ENCODE measurements at regions of chr17 and their contacts with region 1.

Region 1: DNA sequence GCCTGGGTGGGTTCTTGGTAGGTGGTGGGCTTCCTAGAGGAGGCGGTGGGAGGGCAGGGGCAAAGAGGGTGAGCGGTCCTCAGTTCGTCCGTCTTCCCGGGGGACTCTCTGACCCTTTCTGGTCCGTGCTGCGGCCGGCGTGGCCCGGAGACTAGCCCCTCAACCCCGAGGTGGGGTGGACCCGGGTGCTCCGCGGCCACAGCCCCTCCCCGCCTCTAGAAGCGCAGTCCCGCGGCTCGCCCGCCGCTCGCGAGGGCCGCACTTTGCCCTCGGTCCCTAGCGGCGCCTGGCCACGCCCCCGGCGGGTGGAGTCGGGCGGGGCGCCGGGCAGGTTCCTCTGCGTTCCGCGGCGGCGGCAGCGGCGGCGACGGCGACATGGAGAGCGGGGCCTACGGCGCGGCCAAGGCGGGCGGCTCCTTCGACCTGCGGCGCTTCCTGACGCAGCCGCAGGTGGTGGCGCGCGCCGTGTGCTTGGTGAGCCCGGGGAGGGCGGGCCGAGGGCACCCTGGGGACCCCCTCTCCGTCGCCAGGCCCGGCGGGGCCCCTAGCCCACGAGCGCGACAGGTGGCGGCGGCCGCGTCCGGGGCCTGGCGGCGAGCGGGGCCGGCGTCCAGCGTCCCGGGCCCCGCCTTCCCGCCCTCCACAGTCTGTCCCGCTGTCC is at the start of gene SYNGR2:
- DNase-seq: no peak
- ATAC-seq: peak; percentile 70
- H3K4me3 ChIP-seq: peak within 1 kb of the TSS; percentile 70
- H3K27ac ChIP-seq: peak within 1 kb of the TSS; percentile 94
- H3K4me1 ChIP-seq: peaks cover 30% of the 10 kb centered on the region
- H3K27me3 ChIP-seq: no peaks in the 10 kb centered on the region
- CTCF ChIP-seq: no peak
- EP300 ChIP-seq: no peak
- POLR2A ChIP-seq: peak; percentile 80
- RAD21 ChIP-seq: no peak
- polyA plus RNA-seq, gene SYNGR2: 4.4 to 28.8 TPM

Region 2: GRCh38 chr17:78040440-78041385 is 127.7 kb before region 1 on chr17:
- CTCF ChIA-PET with region 1: no interaction called
- POLR2A ChIA-PET with region 1: interaction called, 13 read pairs
- RAD21 ChIA-PET with region 1: no interaction called
- SMC1A ChIA-PET with region 1: no interaction called
- in situ Hi-C with region 1: no loop called
- intact Hi-C with region 1: no loop called
- DNase-seq: peak; percentile 21
- ATAC-seq: peak; percentile 99
- H3K4me3 ChIP-seq: peak overlapping the region; percentile 57; the same call in 1 of the 2 replicates
- H3K27ac ChIP-seq: peak overlapping the region; percentile 34; the same call in 1 of the 2 replicates
- H3K4me1 ChIP-seq: no peaks in the 10 kb centered on the region
- H3K27me3 ChIP-seq: no peaks in the 10 kb centered on the region
- CTCF ChIP-seq: peak in 1 of 3 experiments; percentile 25; a peak in 2 of 6 replicates
- EP300 ChIP-seq: no peak
- POLR2A ChIP-seq: no peak
- RAD21 ChIP-seq: no peak

Region 3: DNA sequence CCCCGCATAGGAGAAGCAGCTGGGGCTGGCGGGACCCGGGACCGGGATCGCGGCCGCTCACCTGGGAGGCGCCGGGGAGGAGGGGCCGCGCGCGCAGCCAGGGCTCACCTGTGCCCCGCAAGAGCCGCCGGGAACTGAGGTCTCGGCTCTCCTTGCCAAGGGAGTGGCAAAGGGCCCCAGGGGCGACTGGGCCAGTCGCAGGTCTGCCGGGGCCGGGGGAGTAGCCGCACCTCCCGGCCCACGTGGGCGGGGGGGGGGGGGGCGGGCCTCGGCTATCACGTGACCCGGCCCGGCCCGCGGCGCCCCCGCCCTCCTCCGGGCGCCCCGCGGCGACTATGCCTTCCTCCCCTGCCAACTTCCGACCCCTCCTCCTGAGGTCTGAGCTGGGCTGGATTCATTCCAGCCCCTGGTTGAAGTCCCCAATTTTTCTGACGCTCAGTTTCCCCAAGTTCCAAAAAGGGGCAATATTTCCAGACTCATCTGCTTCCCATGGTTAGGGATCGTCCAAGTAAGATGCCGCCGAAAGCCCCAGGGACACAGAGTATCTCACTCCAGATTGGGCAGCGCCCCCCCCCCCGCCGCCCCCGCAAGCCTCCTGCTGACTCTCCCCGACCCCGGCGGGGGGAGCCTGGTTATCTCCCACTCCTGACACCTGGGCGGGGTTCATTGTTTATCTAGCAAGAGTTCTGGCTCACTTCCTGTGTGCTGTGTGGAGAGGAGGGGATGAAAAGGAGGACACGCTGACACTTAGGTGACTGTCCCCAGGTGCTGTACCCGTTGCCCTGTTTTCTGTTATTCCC is 39.6 kb before region 1 on chr17 and contains the start of gene TMC6:
- CTCF ChIA-PET with region 1: interaction called, 132 read pairs
- POLR2A ChIA-PET with region 1: interaction called, 85 read pairs
- RAD21 ChIA-PET with region 1: interaction called, 83 read pairs
- SMC1A ChIA-PET with region 1: interaction called, 51 read pairs
- in situ Hi-C with region 1: no loop called
- intact Hi-C with region 1: no loop called
- DNase-seq: no peak
- ATAC-seq: peak; percentile 13
- H3K4me3 ChIP-seq: peak within 1 kb of the TSS; percentile 94
- H3K27ac ChIP-seq: peak within 1 kb of the TSS; percentile 95
- H3K4me1 ChIP-seq: peaks cover 61% of the 10 kb centered on the region
- H3K27me3 ChIP-seq: no peaks in the 10 kb centered on the region
- CTCF ChIP-seq: no peak
- EP300 ChIP-seq: peak in 1 of 2 experiments; percentile 9; a peak in 1 of 4 replicates
- POLR2A ChIP-seq: peak; percentile 89
- RAD21 ChIP-seq: no peak
- polyA plus RNA-seq, gene TMC6: 1.9 to 11.5 TPM

Region 4: GRCh38 chr17:78133971-78134898 is 34.1 kb before region 1 on chr17:
- CTCF ChIA-PET with region 1: interaction called, 132 read pairs
- POLR2A ChIA-PET with region 1: interaction called, 85 read pairs
- RAD21 ChIA-PET with region 1: interaction called, 83 read pairs
- SMC1A ChIA-PET with region 1: interaction called, 51 read pairs
- in situ Hi-C with region 1: no loop called
- intact Hi-C with region 1: loop called (anchors 2 kb)
- DNase-seq: no peak
- ATAC-seq: peak; percentile 34
- H3K4me3 ChIP-seq: peak overlapping the region; percentile 94
- H3K27ac ChIP-seq: peak overlapping the region; percentile 93
- H3K4me1 ChIP-seq: peaks cover 64% of the 10 kb centered on the region
- H3K27me3 ChIP-seq: no peaks in the 10 kb centered on the region
- CTCF ChIP-seq: peak; percentile 76 to 78 (median 76)
- EP300 ChIP-seq: peak in 1 of 2 experiments; percentile 58; a peak in 1 of 4 replicates
- POLR2A ChIP-seq: peak; percentile 76
- RAD21 ChIP-seq: peak; percentile 75

Region 5: DNA sequence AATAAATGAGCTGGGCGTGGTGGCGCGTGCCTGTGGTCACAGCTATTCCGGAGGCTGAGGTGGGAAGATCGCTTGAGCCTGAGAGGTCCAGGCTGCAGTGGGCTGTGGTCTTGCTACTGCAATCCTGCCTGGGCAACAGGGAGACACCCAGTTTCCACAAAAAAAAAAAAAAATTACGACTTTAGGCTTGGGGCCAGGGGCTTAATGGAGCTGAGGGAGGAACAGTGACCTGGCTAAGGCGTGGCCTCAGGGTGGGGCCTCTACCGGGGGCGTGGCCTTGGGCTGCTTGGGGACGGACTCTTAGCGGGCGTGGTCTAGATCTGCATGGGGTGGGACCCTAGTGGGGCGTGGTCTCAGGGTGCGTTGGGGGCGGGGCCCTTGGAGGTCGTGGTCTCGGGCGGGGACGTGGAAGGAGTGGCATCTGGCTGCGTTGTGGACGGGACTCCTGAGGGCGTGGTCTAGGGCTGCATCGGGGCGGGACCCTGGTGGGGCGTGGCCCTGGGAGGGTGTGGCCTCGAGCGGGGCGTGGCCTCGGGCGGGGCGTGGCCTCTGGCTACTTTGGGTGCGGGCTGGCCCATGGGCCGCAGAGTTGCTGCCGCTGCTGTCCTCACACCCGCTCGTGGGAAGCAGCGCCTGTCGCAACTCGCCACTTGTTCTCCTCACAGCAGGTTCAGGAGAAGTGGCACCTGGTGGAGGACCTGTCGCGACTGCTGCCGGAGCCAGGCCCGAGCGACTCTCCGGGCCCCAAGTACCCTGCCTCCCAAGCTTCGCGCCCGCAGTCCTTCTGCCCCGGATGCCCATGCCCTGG is 28.0 kb before region 1 on chr17:
- CTCF ChIA-PET with region 1: interaction called, 132 read pairs
- POLR2A ChIA-PET with region 1: interaction called, 37 read pairs
- RAD21 ChIA-PET with region 1: interaction called, 83 read pairs
- SMC1A ChIA-PET with region 1: interaction called, 51 read pairs
- in situ Hi-C with region 1: no loop called
- intact Hi-C with region 1: loop called (anchors 1 kb)
- DNase-seq: peak; percentile 90
- ATAC-seq: peak; percentile 90
- H3K4me3 ChIP-seq: no peak overlapping the region
- H3K27ac ChIP-seq: no peak overlapping the region
- H3K4me1 ChIP-seq: peaks cover 64% of the 10 kb centered on the region
- H3K27me3 ChIP-seq: no peaks in the 10 kb centered on the region
- CTCF ChIP-seq: no peak
- EP300 ChIP-seq: no peak
- POLR2A ChIP-seq: peak; percentile 87
- RAD21 ChIP-seq: no peak

Region 6: GRCh38 chr17:78147315-78147998 is 20.9 kb before region 1 on chr17:
- CTCF ChIA-PET with region 1: interaction called, 51 read pairs
- POLR2A ChIA-PET with region 1: interaction called, 37 read pairs
- RAD21 ChIA-PET with region 1: interaction called, 6 read pairs
- SMC1A ChIA-PET with region 1: interaction called, 11 read pairs
- in situ Hi-C with region 1: no loop called
- intact Hi-C with region 1: no loop called
- DNase-seq: peak; percentile 85
- ATAC-seq: peak; percentile 82
- H3K4me3 ChIP-seq: peak overlapping the region; percentile 10; the same call in 1 of the 2 replicates
- H3K27ac ChIP-seq: peak overlapping the region; percentile 96
- H3K4me1 ChIP-seq: peaks cover 70% of the 10 kb centered on the region
- H3K27me3 ChIP-seq: no peaks in the 10 kb centered on the region
- CTCF ChIP-seq: no peak
- EP300 ChIP-seq: peak; percentile 88 to 93; a peak in 3 of 4 replicates
- POLR2A ChIP-seq: peak; percentile 49; the same call in 1 of the 2 replicates
- RAD21 ChIP-seq: 0 out of 2 replicates have a peak, but pooled peaks have one; percentile 4

Region 7: DNA sequence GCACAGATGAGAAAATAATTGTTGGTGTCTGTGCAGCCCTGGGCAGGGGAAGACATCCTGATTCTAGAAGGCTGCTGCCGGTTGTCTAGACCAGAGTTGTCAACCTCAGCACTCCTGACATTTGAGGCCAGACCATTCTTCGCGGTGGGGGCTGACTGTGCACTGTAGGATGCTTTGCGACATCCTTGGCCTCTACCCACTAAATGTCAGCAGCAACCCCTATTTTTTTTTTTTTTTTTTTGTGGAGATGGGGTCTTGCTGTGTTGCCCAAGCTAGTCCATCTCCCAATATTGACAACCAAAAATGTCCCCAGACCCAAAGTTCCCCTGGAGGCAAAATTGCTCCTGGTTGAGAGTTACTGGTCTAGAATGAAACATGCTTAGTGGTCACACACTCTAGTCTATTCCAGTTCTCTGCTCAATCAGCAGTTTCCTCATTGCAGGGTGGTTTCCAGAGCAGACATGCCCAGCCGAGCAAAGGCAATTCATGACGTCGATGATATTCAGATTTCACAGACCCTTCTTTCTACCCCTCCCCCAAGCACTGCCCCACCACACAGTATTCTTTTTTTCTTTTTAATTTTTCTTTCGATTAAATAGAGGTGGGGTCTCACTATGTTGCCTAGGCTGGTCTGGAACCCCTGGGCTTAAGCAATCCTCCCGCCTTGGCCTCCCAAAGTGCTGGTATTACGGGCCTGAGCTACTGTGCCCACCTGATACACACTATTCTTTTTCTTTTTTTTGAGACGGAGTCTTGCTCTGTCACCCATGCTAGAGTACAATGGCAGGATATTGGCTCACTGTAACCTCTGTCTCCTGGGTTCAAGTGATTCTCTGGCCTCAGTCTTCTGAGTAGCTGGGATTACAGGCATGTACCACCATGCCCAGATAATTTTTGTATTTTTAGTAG is 13.2 kb before region 1 on chr17:
- CTCF ChIA-PET with region 1: interaction called, 7 read pairs
- POLR2A ChIA-PET with region 1: interaction called, 20 read pairs
- RAD21 ChIA-PET with region 1: interaction called, 9 read pairs
- SMC1A ChIA-PET with region 1: interaction called, 11 read pairs
- in situ Hi-C with region 1: no loop called
- intact Hi-C with region 1: loop called (anchors 2 kb)
- DNase-seq: peak; percentile 97
- ATAC-seq: peak; percentile 80
- H3K4me3 ChIP-seq: no peak overlapping the region
- H3K27ac ChIP-seq: peak overlapping the region; percentile 93
- H3K4me1 ChIP-seq: peaks cover 64% of the 10 kb centered on the region
- H3K27me3 ChIP-seq: no peaks in the 10 kb centered on the region
- CTCF ChIP-seq: no peak
- EP300 ChIP-seq: peak; percentile 61 to 88; a peak in 3 of 4 replicates
- POLR2A ChIP-seq: peak; percentile 76
- RAD21 ChIP-seq: no peak

Region 8: GRCh38 chr17:78197147-78197832 is 28.9 kb after region 1 on chr17:
- CTCF ChIA-PET with region 1: no interaction called
- POLR2A ChIA-PET with region 1: no interaction called
- RAD21 ChIA-PET with region 1: no interaction called
- SMC1A ChIA-PET with region 1: no interaction called
- in situ Hi-C with region 1: no loop called
- intact Hi-C with region 1: no loop called
- DNase-seq: no peak
- ATAC-seq: no peak
- H3K4me3 ChIP-seq: no peak overlapping the region
- H3K27ac ChIP-seq: no peak overlapping the region
- H3K4me1 ChIP-seq: peaks cover 10% of the 10 kb centered on the region
- H3K27me3 ChIP-seq: no peaks in the 10 kb centered on the region
- CTCF ChIP-seq: no peak
- EP300 ChIP-seq: no peak
- POLR2A ChIP-seq: no peak
- RAD21 ChIP-seq: no peak

Region 9: DNA sequence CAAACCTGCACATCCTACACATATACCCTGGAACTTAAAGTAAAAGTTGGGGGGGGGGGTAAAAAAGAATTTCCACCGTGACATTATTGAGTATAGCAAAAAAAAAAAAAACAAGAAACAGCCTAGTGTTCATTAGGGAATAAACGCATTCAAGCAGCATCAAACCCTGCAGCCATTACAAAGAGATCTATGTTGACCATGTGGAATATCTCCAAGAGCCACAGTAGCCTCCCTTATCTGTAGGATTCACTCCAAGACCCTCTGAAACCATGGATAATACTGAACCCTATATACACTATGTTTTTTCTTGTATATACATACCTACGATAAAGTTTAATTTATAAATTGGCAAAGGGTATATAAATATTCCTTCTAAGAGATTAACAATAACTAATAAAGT is 40.1 kb after region 1 on chr17:
- CTCF ChIA-PET with region 1: no interaction called
- POLR2A ChIA-PET with region 1: no interaction called
- RAD21 ChIA-PET with region 1: no interaction called
- SMC1A ChIA-PET with region 1: no interaction called
- in situ Hi-C with region 1: no loop called
- intact Hi-C with region 1: no loop called
- DNase-seq: no peak
- ATAC-seq: no peak
- H3K4me3 ChIP-seq: no peak overlapping the region
- H3K27ac ChIP-seq: no peak overlapping the region
- H3K4me1 ChIP-seq: no peaks in the 10 kb centered on the region
- H3K27me3 ChIP-seq: no peaks in the 10 kb centered on the region
- CTCF ChIP-seq: no peak
- EP300 ChIP-seq: no peak
- POLR2A ChIP-seq: no peak
- RAD21 ChIP-seq: no peak